Right ventricle myocardium superior (tissue), 1 donor: ENCODE measurements at regions of chr9 and their contacts with region 1.

Region 1: DNA sequence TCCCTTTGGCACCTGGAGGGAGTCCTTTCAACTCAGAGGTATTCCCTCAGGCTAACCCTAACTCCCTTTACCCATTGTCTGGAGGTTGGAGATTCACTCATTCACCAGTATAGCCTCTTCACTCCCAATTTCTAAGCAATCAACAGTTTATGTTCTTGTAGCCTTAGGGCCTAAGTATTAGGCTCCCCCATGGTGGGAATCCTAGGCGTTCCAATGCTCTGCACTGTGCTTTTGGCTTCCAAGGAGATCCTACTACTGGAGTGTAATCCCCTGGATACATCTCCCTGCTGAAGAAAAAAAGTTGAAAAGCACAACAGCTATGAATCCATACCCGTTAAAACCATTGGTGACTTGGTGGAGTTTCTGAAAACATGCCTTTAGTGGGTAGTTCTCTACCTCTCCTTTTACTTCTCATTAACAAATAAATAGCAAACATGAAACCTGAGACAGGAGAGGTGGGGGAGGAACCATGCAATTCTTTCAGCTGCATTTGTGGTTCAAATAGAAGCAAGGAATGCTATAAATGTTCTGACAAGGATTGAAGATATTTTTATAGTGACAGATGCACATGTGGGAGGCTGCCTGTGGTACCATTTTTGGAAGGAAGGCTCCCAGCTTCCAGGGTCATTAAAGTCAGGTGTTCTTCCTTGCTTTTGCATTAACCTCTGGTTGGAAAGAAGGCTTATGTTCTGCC is 397.1 kb downstream of the DMAC1 start:
- DNase-seq: no peak
- ATAC-seq: peak; percentile 9

Region 2: GRCh38 chr9:7216004-7216831 is 186.3 kb before region 1 on chr9:
- intact Hi-C with region 1: no loop called
- DNase-seq: no peak
- ATAC-seq: no peak

Region 3: GRCh38 chr9:7536310-7536939 is 133.9 kb after region 1 on chr9:
- intact Hi-C with region 1: loop called (anchors 5 kb)
- DNase-seq: peak; percentile 53
- ATAC-seq: peak; percentile 84

Region 4: DNA sequence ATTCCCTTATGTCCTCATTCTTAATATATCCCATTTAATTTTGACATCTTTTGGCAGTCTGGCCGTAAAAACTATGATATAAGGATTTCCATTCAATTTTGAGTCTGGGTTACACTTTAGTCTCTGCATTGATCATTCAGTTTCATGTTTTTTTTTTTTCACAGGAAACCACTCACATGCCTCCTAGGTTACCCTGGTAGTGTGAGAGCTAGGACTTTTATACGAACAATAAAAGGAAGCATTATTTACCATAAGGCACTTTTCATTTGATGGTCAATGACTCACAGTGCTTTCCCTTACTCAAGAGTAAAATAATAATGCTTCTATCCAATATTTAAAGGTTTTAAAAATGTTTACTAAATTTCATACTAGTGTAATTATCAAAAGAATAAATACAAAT is 413.5 kb after region 1 on chr9:
- intact Hi-C with region 1: no loop called
- DNase-seq: no peak
- ATAC-seq: no peak

Region 5: GRCh38 chr9:8419596-8420275 is 1017.3 kb after region 1 on chr9:
- intact Hi-C with region 1: no loop called
- DNase-seq: no peak
- ATAC-seq: no peak